ENCODE measurements at regions of chr16 and their contacts with region 1.

Region 1: DNA sequence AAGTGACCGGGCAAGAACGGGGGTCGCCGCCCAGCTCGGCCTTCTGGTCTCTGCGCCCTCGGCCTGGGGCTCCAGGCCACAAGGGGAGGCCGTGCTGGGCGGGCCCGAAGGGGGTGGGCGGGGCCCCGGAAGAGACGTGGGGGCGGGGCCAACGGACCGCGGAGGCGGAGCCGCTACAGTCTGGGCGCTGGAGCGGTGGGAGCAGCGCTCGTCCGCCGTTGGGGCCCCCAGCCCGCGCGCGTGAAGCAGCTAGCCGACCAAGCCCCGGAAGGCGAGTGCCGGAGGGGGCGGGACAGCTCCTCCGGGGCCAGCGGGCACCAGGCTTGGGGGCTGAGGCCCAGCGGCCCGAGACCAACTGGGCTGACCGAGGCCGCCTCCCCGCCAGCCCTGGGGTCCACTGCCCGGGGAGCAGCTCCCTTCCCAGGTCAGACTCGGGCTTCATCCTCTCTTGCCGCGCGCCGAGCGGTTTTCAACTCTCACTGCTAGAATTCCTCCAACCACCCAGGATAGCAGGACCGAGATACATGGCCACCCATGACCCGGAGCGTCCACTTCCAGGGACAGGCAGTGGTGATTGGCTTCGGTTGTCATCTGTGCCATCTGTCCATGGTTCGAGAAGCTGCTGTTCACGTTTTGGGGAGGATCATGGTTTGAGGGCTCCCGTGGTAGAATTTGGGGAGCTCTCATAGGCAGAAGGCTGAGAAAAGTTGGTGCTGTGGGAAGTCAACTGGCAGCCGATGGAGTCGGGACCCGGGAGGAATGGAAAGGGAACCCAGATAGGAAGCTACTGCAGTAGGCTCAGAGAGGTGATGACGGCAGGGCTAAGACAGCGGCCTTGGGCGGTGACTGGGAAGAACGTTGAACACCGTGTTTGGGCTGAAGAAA is 44.6 kb upstream of the LCMT1 start:
- DNase-seq: peak; percentile 53 to 96 (median 76)

Region 2: GRCh38 chr16:24552705-24553246 is 514.2 kb before region 1 on chr16:
- intact Hi-C with region 1: no loop called
- DNase-seq: no peak

Region 3: DNA sequence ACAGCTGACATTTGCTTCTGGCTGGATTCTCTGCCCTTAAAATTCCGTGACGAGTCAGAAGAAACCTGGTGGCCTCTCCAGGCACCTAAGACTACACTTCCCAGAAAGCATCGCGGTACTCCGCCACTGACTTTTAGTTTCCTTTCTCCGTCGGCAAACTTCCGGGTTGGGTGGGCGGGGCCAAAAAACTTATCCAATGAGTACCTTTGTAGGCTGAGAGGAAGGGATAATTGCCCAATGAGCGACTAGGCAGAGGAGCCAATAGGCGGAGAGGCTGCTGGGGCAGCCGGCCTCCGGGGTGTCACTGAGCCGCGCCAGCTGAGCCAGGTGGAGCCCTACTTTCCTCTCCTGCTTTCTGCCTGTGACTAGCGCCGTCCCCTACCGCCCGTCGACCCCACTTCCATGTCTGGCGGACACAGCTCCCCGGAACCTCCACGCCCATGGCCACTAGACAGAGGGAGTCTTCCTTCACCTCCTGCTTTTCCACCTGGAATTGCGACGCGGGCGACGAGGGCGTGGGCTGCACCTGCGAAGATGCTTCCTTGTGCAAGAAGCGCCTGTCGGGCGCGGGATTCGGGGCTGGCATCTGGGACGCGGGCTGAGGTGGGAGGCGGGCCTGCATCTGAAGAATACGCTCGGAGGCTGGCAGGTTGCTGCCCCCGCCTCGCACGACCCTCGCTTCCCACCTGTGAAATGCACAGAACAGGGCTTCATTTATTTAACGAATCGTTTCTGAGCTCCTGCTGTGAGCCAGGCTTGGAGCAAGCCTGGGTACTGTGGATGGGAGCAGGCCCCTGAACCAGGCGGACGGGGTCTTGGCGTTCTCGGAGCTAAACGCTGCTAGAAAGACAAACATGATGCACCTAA is 35.3 kb before region 1 on chr16:
- intact Hi-C with region 1: loop called (anchors 2 kb)
- DNase-seq: peak; percentile 84 to 98 (median 89)

Region 4: GRCh38 chr16:25106567-25107465 is 39.8 kb after region 1 on chr16:
- intact Hi-C with region 1: loop called (anchors 5 kb)
- DNase-seq: peak; percentile 96 to 99 (median 98)

Region 5: GRCh38 chr16:25210758-25211157 is 143.8 kb after region 1 on chr16:
- intact Hi-C with region 1: no loop called
- DNase-seq: peak in 1 of 10 donors; percentile 3

Region 6: GRCh38 chr16:25270577-25270976 is 203.6 kb after region 1 on chr16:
- intact Hi-C with region 1: no loop called
- DNase-seq: no peak

Measured in posterior cingulate gyrus (tissue), 11 donors.